ENCODE measurements at regions of chr2 and their contacts with region 1.

Region 1: GRCh38 chr2:86396291-86396785 is 44.8 kb upstream of the KDM3A start:
- DNase-seq: peak; percentile 25 to 52
- ATAC-seq: peak; percentile 75 to 83 (median 82)
- H3K4me3 ChIP-seq: peak overlapping the region; percentile 46
- H3K27ac ChIP-seq: peak overlapping the region; percentile 51
- H3K4me1 ChIP-seq: peaks cover 23% of the 10 kb centered on the region
- H3K27me3 ChIP-seq: no peaks in the 10 kb centered on the region
- CTCF ChIP-seq: peak; percentile 46

Region 2: GRCh38 chr2:86440631-86441391 is 44.5 kb after region 1 on chr2 and contains the start of gene KDM3A:
- intact Hi-C with region 1: loop called in 1 of 2 experiments (anchors 2 kb)
- DNase-seq: peak; percentile 100
- ATAC-seq: peak; percentile 93 to 94 (median 94)
- H3K4me3 ChIP-seq: peak within 1 kb of the TSS; percentile 69
- H3K27ac ChIP-seq: peak within 1 kb of the TSS; percentile 97
- H3K4me1 ChIP-seq: peaks cover 31% of the 10 kb centered on the region
- H3K27me3 ChIP-seq: no peaks in the 10 kb centered on the region
- CTCF ChIP-seq: no peak
- total RNA-seq, gene KDM3A: 20.2 to 34.7 (median 27.4) TPM

Measured in psoas muscle (tissue), 8 donors.